ENCODE measurements at regions of chr5 and their contacts with region 1.

Region 1: DNA sequence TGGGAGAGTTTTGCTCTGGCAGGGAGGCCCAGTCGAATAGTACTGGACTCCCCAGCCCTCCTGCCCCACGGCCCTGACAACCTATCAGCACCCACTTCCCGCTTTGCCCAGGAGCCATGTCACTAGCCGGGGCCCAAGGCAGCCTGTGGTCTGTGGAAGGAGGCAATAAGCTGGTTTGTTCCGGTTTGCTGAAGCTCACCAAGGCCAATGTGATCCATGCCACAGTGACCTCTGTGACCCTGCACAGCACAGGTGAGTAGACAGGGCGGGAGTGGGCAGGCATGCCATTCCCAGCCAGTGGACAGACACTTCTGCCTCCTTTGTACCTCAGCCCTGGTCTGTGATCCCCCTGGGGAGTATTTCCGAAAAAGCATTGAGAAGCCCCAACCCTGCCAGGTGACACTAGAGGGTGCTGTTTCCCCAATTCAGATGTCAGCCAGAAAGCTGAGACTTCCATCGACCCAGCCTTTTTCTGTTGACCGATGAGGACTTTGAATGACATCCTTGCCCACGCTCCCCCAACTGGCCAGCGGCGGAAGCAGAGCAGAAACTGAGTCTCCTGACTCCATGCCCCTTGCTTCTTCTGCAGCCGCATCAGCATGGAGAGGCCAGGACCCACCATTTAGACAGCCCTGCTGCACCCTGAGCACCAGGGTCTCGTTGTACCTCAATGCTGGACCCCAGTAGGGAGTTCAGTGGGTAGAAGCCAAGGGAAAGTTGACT is 9.6 kb downstream of the PCYOX1L start:
- DNase-seq: no peak
- H3K4me3 ChIP-seq: no peak overlapping the region
- CTCF ChIP-seq: peak; percentile 78

Region 2: GRCh38 chr5:147935032-147935431 is 1432.4 kb before region 1 on chr5:
- CTCF ChIA-PET with region 1: no interaction called
- POLR2A ChIA-PET with region 1: no interaction called
- DNase-seq: no peak
- H3K4me3 ChIP-seq: no peak overlapping the region
- CTCF ChIP-seq: no peak

Region 3: GRCh38 chr5:149333711-149334443 is 33.5 kb before region 1 on chr5:
- CTCF ChIA-PET with region 1: interaction called, 21 read pairs
- POLR2A ChIA-PET with region 1: no interaction called
- DNase-seq: peak; percentile 33
- H3K4me3 ChIP-seq: no peak overlapping the region
- CTCF ChIP-seq: no peak

Region 4: DNA sequence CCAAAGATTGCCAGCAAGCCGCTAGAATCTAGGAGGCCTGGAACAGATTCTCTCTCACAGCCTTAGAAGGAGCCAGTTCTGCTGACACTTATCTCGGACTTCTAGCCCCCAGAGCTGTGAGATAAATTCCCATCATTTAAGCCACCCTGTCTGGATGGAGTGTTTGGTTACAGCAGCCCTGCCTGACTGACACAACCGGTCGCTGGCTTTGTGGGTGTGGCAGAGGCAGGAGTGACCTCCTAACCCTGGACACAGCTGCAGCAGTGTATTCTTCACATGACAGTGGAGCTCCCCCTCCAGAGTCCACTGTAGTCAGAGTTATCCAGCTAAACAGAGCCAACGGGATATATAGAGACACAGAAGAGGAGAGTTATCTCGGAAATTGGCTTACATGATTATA is 32.9 kb after region 1 on chr5:
- CTCF ChIA-PET with region 1: interaction called, 470 read pairs
- POLR2A ChIA-PET with region 1: interaction called, 10 read pairs
- DNase-seq: no peak
- H3K4me3 ChIP-seq: no peak overlapping the region
- CTCF ChIP-seq: no peak

Region 5: DNA sequence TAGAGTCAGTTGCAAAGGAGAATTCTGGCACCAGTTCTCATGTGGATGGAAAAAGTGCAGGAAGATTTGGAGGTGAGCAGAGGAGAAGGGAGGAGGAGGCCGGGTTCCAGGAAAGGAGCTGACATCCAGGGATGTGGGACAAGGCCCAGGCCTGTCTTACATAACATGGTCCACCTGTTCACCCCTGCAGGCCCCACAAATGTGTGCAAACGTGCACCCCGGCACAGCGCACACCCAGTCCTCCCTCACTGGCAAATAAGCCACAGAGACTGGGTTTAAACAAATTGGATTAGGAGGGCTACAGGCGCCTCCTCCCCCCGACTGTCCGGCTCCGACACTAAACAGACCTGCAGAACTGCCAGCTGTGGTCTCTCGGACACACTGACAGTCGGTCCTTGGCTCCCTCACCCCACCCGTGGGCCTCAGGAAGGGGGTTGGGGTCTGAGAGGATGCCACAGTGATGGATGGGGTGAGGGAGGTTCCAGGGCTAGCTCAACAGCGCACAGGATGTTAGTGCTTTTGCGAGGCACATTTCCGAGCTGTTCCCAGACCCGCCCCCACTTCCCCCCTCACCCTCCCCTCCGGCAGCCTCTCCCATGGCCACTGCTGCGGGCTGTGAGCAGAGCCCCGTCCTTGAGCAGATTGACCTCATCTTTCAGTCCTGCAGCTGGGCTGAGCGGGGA is 55.1 kb after region 1 on chr5:
- CTCF ChIA-PET with region 1: interaction called, 519 read pairs
- POLR2A ChIA-PET with region 1: no interaction called
- DNase-seq: no peak
- H3K4me3 ChIP-seq: no peak overlapping the region
- CTCF ChIP-seq: no peak

Region 6: DNA sequence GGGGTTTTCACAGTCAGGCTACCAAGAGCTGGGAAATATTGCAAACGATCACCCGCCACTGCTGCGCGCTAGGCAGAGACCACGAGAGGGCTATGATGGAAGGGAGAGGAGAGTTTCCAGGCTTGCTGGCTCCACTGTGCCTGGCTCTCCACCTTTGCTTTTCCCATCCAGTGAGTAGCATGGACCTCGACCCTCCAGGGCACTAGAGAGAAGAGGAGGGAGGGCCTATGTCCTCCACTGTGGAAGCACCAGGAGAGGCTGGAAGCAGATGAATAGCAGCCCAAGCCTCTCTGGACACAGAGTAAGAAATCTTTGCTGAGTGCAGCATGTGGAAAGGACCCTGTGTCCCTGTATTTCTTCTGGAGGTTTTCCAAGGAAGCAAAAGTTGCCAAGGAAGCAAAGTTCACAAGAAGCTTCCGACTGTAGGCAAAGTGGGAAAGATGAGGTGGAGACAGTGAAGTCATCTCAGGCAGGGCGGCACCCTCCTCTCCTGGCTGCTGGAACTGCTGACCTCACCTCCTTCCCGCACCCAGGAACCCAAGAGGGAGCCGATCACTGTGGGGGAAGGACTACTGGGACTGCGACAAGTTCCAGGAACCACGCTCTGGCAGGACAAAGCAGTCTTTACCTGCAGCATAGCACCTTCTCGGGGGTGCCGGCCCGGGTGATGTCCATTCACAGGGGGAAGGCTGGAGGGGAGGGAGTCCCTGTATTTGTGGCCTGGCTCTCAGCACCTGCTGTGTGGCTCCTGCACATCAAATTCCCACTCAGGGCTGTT is 104.2 kb after region 1 on chr5:
- CTCF ChIA-PET with region 1: no interaction called
- POLR2A ChIA-PET with region 1: no interaction called
- DNase-seq: no peak
- H3K4me3 ChIP-seq: no peak overlapping the region
- CTCF ChIP-seq: no peak

Region 7: DNA sequence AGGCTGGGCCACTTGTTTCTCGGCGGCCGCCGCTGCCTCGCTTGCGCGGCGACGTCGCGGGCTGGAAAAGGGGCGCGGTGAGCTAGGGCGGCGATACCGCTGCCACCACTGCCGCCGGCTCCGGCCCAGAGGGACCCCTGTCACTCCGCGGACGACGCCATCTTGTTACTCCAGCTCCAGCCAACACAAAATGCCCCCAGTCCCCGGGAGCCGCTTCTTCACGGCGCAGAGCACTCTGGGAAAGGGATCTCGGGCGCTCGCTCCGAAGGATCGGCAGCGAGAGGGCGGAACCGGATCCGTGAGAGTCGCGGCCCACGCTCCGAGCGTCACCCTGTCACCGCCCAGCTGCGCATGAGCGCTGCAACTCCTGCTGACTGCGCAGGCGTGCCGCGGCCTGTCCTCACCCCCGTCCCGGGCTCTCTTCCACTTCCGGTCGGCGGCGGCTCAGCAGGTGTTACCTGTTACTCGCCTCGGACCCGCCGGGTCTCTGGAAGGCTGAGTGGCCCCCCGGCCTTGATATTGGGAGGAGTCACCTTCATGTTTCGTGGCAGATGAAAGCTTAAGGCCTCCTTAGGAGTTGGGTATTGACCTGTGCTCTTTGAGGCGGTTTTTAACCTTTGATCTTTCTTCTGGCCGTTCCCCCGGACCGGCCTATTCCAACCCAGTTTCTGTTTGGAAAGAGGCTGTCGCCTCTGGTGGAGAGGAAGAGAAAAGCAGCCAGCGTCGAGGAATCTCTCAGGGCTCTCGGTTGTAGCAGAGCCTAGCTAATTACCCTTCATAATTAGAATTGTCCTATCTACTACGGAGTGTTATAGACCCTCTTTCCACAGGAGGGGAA is 184.0 kb after region 1 on chr5 and contains the start of gene CSNK1A1:
- CTCF ChIA-PET with region 1: interaction called, 19 read pairs
- POLR2A ChIA-PET with region 1: no interaction called
- DNase-seq: peak; percentile 82
- H3K4me3 ChIP-seq: peak within 1 kb of the TSS; percentile 95
- CTCF ChIP-seq: peak; percentile 64

Region 8: DNA sequence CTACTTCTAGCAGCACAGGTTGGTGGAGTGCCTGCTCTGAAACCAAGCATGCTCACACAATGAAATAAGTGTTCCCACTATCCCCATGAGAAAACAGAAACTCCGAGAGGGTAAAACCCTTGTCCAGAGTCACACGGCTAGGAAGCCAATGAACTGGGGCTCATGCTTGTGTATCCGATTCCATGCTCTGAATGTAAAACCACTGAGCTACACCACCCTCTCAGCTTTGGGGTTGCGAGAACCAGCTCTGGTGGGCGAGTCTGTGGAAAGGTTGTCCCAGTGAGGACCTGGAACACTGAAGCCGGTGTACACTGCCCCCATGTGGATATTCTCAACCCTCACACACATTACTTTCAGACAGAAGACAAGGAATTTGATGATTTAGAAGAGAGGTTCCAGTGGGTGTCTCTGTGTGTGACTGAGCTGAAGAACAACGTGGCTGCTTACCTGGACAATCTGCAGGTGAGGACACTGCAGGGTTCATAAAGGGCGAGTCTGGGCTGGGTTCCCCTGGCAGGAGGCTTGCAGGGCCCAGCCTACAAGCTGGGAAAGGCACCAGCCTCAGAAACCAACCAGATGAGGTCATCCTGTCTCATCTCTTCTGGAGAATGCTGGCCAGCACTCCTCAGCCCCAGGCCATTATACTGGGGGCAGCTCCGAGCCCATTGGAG is 251.3 kb after region 1 on chr5:
- CTCF ChIA-PET with region 1: interaction called, 24 read pairs
- POLR2A ChIA-PET with region 1: no interaction called
- DNase-seq: no peak
- H3K4me3 ChIP-seq: no peak overlapping the region
- CTCF ChIP-seq: peak; percentile 72

Region 9: DNA sequence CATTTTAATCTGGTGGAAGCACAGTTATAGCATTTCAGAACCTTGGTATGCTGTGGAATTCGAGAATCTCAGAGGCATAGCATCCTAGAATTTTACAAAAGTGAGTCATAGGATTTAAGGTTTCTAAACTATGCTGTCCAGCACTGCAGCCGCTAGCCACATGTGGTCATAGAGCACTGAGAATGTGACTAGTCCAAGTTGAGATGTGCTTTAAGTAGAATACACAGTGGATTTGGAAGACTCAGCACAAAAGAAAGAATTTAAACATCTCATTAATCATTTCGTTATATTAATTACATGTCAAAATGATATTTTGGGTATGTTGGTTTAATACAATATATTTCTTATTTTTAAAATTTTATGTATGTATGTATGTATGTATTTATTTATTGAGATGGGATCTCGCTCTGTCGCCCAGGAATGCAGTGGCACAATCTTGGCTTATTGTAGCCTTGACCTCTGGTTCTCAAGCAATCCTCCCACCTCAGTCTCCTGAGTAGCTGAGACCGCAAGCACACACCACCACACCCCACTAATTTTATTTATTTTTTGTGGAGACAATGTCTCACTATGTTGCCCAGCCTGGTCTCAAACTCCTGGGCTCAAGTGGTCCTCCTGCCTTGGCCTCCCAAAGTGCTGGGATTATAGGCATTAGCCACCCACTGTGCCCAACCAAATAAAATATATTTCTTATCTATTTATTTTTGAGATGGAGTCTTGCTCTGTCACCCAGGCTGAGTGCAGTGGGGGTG is 1102.5 kb after region 1 on chr5:
- CTCF ChIA-PET with region 1: no interaction called
- POLR2A ChIA-PET with region 1: no interaction called
- DNase-seq: peak; percentile 97
- H3K4me3 ChIP-seq: no peak overlapping the region
- CTCF ChIP-seq: no peak

Measured in AG04449 (cell line).